ENCODE measurements at regions of chr6 and their contacts with region 1.

Region 1: GRCh38 chr6:29763491-29764289 is 40.5 kb downstream of the HLA-F start:
- DNase-seq: peak; percentile 15 to 51 (median 16)
- H3K4me3 ChIP-seq: no peak overlapping the region
- H3K4me3 Mint-ChIP-seq: no peak overlapping the region
- H3K27ac ChIP-seq: no peak overlapping the region
- H3K27ac Mint-ChIP-seq: peak overlapping the region in 2 of 7 donors; percentile 30 to 34
- H3K4me1 ChIP-seq: peaks cover 4 to 7% of the 10 kb centered on the region in 2 donors
- H3K4me1 Mint-ChIP-seq: peaks cover 14% of the 10 kb centered on the region
- H3K27me3 ChIP-seq: no peaks in the 10 kb centered on the region
- H3K27me3 Mint-ChIP-seq: peaks cover 4 to 15% (median 6%) of the 10 kb centered on the region in 3 donors
- CTCF ChIP-seq: no peak

Region 2: GRCh38 chr6:29992807-29993206 is 229.1 kb after region 1 on chr6:
- intact Hi-C with region 1: loop called in 1 of 2 experiments (anchors 2 kb)
- DNase-seq: peak in 2 of 3 donors; percentile 41 to 60
- H3K4me3 ChIP-seq: no peak overlapping the region
- H3K4me3 Mint-ChIP-seq: no peak overlapping the region
- H3K27ac ChIP-seq: no peak overlapping the region
- H3K27ac Mint-ChIP-seq: no peak overlapping the region
- H3K4me1 ChIP-seq: no peaks in the 10 kb centered on the region
- H3K4me1 Mint-ChIP-seq: peaks cover 2% of the 10 kb centered on the region
- H3K27me3 ChIP-seq: no peaks in the 10 kb centered on the region
- H3K27me3 Mint-ChIP-seq: peaks cover 6 to 12% (median 8%) of the 10 kb centered on the region in 3 donors
- CTCF ChIP-seq: no peak

Measured in CD14-positive monocyte (primary cell).